MCF 10A (cell line): ENCODE measurements at regions of chr12 and their contacts with region 1.

Region 1: GRCh38 chr12:12327802-12328201 is 22.2 kb downstream of the MANSC1 start:
- DNase-seq: peak; percentile 66
- H3K4me3 Mint-ChIP-seq: no peak overlapping the region
- H3K27ac Mint-ChIP-seq: no peak overlapping the region
- H3K4me1 Mint-ChIP-seq: peaks cover 6% of the 10 kb centered on the region
- H3K27me3 Mint-ChIP-seq: no peaks in the 10 kb centered on the region
- CTCF ChIP-seq: peak; percentile 59

Region 2: DNA sequence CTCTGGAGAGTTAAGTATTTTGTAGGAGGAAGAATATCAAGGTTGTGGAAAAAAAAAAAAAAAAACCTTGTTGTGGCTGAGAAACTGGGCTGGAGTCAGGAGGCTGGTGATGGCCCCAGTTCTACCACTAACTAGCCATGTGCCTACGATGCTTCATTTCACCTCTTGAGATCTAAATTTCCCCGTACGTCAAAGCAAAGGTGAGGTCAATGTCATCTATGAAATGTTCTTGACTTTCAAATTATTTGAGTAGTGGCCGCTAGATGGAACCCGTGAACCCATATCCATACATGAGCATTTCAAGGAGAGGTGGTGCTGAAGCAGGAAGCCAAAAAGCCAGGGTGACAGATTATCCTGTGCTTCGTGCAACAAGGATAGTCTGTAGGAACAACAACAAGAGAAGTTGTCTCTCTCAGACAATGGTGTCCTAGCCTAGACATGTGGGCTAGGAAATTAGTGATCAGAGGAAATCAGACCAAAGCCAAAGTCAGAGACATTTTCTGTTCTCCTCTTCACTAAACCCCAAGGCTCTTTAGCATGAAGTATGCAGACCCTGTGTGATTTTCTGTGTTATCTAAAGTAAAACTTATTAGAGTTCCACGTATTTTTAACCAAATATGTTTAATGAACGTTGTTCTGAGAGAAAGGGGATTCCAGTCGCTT is 773.8 kb before region 1 on chr12:
- CTCF ChIA-PET with region 1: interaction called, 3 read pairs
- POLR2A ChIA-PET with region 1: no interaction called
- intact Hi-C with region 1: loop called (anchors 10 kb)
- DNase-seq: peak; percentile 78
- H3K4me3 Mint-ChIP-seq: no peak overlapping the region
- H3K27ac Mint-ChIP-seq: no peak overlapping the region
- H3K4me1 Mint-ChIP-seq: peaks cover 11% of the 10 kb centered on the region
- H3K27me3 Mint-ChIP-seq: peaks cover 57% of the 10 kb centered on the region
- CTCF ChIP-seq: peak; percentile 59

Region 3: GRCh38 chr12:12032851-12033588 is 294.8 kb before region 1 on chr12:
- CTCF ChIA-PET with region 1: interaction called, 21 read pairs
- POLR2A ChIA-PET with region 1: no interaction called
- intact Hi-C with region 1: loop called (anchors 2 kb)
- DNase-seq: peak; percentile 84
- H3K4me3 Mint-ChIP-seq: no peak overlapping the region
- H3K27ac Mint-ChIP-seq: no peak overlapping the region
- H3K4me1 Mint-ChIP-seq: peaks cover 5% of the 10 kb centered on the region
- H3K27me3 Mint-ChIP-seq: no peaks in the 10 kb centered on the region
- CTCF ChIP-seq: peak; percentile 85

Region 4: GRCh38 chr12:12081836-12082497 is 245.8 kb before region 1 on chr12:
- CTCF ChIA-PET with region 1: interaction called, 51 read pairs
- POLR2A ChIA-PET with region 1: interaction called, 3 read pairs
- intact Hi-C with region 1: loop called (anchors 1 kb)
- DNase-seq: peak; percentile 54
- H3K4me3 Mint-ChIP-seq: no peak overlapping the region
- H3K27ac Mint-ChIP-seq: no peak overlapping the region
- H3K4me1 Mint-ChIP-seq: no peaks in the 10 kb centered on the region
- H3K27me3 Mint-ChIP-seq: no peaks in the 10 kb centered on the region
- CTCF ChIP-seq: peak; percentile 29

Region 5: GRCh38 chr12:12086973-12087692 is 240.7 kb before region 1 on chr12:
- CTCF ChIA-PET with region 1: interaction called, 51 read pairs
- POLR2A ChIA-PET with region 1: interaction called, 3 read pairs
- intact Hi-C with region 1: no loop called
- DNase-seq: no peak
- H3K4me3 Mint-ChIP-seq: no peak overlapping the region
- H3K27ac Mint-ChIP-seq: no peak overlapping the region
- H3K4me1 Mint-ChIP-seq: no peaks in the 10 kb centered on the region
- H3K27me3 Mint-ChIP-seq: no peaks in the 10 kb centered on the region
- CTCF ChIP-seq: no peak

Region 6: GRCh38 chr12:12249216-12250050 is 78.4 kb before region 1 on chr12:
- CTCF ChIA-PET with region 1: interaction called, 12 read pairs
- POLR2A ChIA-PET with region 1: no interaction called
- intact Hi-C with region 1: no loop called
- DNase-seq: no peak
- H3K4me3 Mint-ChIP-seq: no peak overlapping the region
- H3K27ac Mint-ChIP-seq: no peak overlapping the region
- H3K4me1 Mint-ChIP-seq: peaks cover 8% of the 10 kb centered on the region
- H3K27me3 Mint-ChIP-seq: no peaks in the 10 kb centered on the region
- CTCF ChIP-seq: no peak